ENCODE measurements at regions of chr4 and their contacts with region 1.

Region 1: DNA sequence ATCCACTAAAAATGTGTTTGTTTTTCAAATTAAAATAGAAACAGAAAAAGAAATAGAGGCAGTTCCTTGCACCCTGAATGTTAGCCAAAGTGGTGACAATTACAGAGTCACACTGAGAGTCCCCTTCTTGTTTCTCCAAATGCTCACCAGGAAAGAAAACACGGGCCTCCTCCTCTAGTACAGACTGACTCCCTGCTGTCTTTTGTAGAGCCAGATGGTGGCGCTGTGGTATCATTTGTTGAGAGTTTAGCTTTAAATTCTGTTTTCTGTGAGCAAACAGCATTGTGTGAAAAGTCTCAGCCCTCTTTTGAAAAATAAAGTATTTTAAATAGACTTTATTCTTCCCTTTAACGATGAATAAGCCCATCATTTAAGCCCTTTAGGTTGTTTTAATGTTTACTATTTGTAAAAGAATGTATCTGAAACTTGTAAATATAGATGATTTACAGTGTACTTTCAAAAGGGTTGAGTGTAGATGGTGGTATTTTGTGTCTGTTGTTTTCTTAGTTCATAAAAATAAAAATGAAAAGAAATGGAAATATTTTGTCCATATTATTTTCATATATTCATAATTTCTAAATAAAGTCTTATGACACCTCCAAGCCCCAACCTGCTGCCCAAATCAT is 36.9 kb upstream of the ATOH1 start:
- DNase-seq: peak; percentile 41
- H3K4me3 ChIP-seq: no peak overlapping the region
- H3K27ac ChIP-seq: no peak overlapping the region
- H3K4me1 ChIP-seq: no peaks in the 10 kb centered on the region
- H3K27me3 ChIP-seq: peaks cover 3 to 13% of the 10 kb centered on the region in 2 experiments
- CTCF ChIP-seq: peak; percentile 75 to 77
- POLR2A ChIP-seq: no peak

Region 2: DNA sequence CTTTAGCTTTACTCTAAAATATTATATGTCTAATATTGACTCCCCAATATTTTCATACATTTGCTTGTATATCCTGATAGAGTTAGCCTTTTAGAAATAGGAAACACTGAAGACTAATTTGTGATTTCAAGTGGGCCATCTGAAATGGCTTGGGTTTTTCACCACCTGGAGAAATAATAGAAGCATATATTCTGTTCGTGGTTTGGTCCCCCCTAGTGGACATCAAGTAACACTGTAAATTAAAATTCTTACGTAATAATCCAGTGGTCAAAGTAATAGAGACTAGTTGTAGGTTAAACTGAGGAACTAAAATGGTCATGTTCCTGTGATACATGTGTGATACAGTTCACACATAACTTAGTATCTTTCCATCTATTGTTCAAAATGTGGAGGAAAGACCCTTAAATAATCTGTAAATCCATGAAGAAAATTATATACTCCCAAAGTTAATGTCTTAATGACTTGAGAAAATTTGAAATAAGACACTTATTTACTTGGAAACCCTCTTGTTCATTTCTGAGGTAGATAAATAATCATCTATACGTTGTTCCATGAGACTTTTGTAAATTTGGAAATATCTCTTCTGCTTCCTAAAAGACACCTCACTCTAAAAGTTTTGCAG is 336.1 kb after region 1 on chr4:
- CTCF ChIA-PET with region 1: interaction called, 21 read pairs
- POLR2A ChIA-PET with region 1: no interaction called
- dilution Hi-C with region 1: no loop called
- intact Hi-C with region 1: loop called (anchors 1 kb)
- DNase-seq: peak; percentile 36
- H3K4me3 ChIP-seq: no peak overlapping the region
- H3K27ac ChIP-seq: no peak overlapping the region
- H3K4me1 ChIP-seq: no peaks in the 10 kb centered on the region
- H3K27me3 ChIP-seq: peaks cover 2 to 4% of the 10 kb centered on the region in 2 experiments
- CTCF ChIP-seq: peak; percentile 30 to 46
- POLR2A ChIP-seq: no peak

Region 3: DNA sequence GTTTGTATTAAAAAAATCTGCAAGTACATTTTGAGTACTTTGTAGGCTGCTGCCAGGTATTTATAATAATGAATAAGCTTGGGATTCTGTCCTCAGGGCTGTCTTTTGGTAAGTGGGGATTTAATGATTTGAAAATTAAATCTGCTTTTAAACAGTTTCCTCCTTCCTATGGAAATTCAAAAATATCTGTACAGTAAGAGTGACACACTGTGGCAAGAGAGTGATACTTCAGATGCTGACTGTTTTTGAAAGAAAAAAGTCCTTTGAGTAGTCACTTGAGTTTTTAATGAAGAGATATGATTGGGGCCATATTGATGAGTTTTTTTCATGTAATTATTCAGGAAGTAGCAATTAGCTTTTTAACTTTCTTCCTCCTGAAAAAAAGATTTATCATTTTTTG is 465.1 kb after region 1 on chr4:
- CTCF ChIA-PET with region 1: no interaction called
- POLR2A ChIA-PET with region 1: no interaction called
- dilution Hi-C with region 1: no loop called
- intact Hi-C with region 1: loop called (anchors 1 kb)
- DNase-seq: peak; percentile 17
- H3K4me3 ChIP-seq: no peak overlapping the region
- H3K27ac ChIP-seq: no peak overlapping the region
- H3K4me1 ChIP-seq: peaks cover under 1% of the 10 kb centered on the region
- H3K27me3 ChIP-seq: no peaks in the 10 kb centered on the region
- CTCF ChIP-seq: no peak
- POLR2A ChIP-seq: no peak

Region 4: GRCh38 chr4:94390804-94391410 is 599.2 kb after region 1 on chr4:
- CTCF ChIA-PET with region 1: no interaction called
- POLR2A ChIA-PET with region 1: no interaction called
- dilution Hi-C with region 1: no loop called
- intact Hi-C with region 1: loop called (anchors 1 kb)
- DNase-seq: peak; percentile 41
- H3K4me3 ChIP-seq: no peak overlapping the region
- H3K27ac ChIP-seq: no peak overlapping the region
- H3K4me1 ChIP-seq: no peaks in the 10 kb centered on the region
- H3K27me3 ChIP-seq: no peaks in the 10 kb centered on the region
- CTCF ChIP-seq: peak; percentile 33 to 39
- POLR2A ChIP-seq: no peak

Region 5: GRCh38 chr4:94488662-94489061 is 697.0 kb after region 1 on chr4:
- CTCF ChIA-PET with region 1: no interaction called
- POLR2A ChIA-PET with region 1: no interaction called
- dilution Hi-C with region 1: no loop called
- intact Hi-C with region 1: no loop called
- DNase-seq: no peak
- H3K4me3 ChIP-seq: no peak overlapping the region
- H3K27ac ChIP-seq: peak overlapping the region; percentile 46
- H3K4me1 ChIP-seq: peaks cover 71% of the 10 kb centered on the region
- H3K27me3 ChIP-seq: no peaks in the 10 kb centered on the region
- CTCF ChIP-seq: no peak
- POLR2A ChIP-seq: no peak

Measured in endothelial cell of umbilical vein (primary cell).